ENCODE measurements at regions of chr17 and their contacts with region 1.

Region 1: DNA sequence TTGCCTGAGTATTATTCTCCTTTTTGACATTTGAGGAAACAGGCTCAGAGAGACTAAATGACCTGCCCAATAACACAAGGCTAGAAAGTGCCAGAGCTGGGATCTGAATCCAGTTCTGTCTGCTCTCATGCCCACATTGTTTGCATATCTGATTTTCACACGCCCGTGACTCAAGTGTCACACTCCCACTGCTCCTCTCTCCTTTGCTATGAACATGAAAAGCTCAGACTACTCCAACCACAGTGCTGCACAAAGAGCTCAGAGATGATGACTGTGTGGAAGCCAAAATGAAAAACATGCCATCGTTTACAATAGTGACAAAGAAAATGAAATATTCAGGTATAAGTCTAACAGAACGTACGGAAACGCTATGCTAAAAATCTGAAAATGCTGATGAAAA is 107.9 kb downstream of the SMG6 start:
- DNase-seq: no peak
- H3K27ac ChIP-seq: no peak overlapping the region
- CTCF ChIP-seq: no peak

Region 2: GRCh38 chr17:1793447-1793806 is 402.3 kb before region 1 on chr17:
- CTCF ChIA-PET with region 1: no interaction called
- POLR2A ChIA-PET with region 1: no interaction called
- DNase-seq: peak; percentile 38
- H3K27ac ChIP-seq: peak overlapping the region; percentile 79
- CTCF ChIP-seq: no peak

Region 3: GRCh38 chr17:2174014-2174413 is 21.7 kb before region 1 on chr17:
- CTCF ChIA-PET with region 1: interaction called, 3 read pairs
- POLR2A ChIA-PET with region 1: interaction called, 10 read pairs
- DNase-seq: no peak
- H3K27ac ChIP-seq: no peak overlapping the region
- CTCF ChIP-seq: no peak

Measured in RWPE1 (cell line).